ENCODE measurements at regions of chr2 and their contacts with region 1.

Region 1: DNA sequence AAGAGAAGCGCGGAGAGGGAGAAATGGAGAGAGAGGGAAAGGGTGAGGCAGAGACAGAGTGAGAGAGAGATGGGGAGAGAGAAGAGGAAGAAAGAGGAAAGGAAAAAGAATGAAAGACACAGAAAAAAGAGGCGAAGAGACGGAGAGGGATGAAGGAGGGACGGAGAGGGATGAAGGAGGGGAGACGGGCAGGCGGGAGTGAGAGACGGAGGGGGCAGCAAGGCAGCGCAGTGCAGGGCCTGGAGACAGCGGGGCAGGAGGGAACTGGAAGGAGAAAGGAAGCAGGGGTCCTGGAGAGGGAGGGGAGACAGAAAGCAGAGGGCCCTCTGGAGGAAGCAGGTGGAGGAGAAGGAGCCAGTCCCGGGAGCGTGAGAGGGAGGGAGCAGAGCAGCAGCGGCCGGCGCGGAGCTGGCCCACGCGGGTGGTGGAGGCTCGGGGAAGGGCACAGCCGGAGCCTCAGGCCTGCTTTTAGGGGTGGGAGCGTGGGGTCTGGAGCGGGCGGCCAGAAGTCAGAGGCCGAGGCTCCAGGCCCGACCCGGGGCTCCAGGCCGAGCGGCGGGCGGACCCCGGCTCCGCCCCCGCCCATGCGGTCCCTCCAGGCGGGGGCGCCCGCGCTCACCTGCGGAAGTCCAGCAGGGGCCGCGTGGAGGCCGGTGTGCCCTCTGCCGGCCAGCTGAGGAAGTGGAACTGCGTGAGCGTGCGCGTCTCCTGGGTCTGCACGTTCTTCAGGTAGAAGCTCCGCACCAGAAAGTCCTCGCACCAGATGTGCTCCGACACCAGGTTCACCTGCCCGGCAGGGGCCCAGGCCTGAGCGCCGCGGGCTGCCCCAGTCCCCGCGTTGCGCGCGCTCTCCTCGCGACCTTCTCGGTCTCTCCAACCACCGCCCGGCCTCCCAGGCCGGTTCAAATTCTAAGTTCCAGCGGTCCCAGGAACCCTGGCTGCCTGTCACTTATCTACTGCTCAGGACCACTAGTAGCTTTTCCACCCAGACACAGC is 14.5 kb downstream of the PTPRN start:
- DNase-seq: peak; percentile 90
- H3K4me3 Mint-ChIP-seq: peak overlapping the region; percentile 66
- H3K27ac Mint-ChIP-seq: no peak overlapping the region
- H3K4me1 Mint-ChIP-seq: peaks cover 22% of the 10 kb centered on the region
- H3K27me3 Mint-ChIP-seq: peaks cover 14% of the 10 kb centered on the region

Region 2: DNA sequence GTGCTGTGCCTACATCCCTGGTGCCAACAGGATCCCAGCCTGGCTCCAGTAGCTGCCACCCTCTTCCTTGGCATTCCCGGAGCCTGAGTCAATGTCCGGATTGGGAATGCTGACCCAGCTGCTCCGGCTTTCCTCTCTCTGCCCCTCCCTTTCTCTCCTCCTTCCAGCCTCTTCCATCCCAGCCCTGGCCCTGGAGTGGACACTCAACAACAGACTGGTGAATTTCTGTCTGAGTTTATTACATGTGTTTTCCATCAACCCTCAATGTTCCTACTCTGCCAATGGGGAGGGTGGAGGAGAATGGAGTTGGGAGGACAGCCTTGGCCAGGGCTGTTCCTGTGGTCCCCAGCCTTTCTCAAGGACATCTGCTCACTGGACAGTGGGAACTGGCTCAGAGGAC is 462.1 kb before region 1 on chr2:
- CTCF ChIA-PET with region 1: no interaction called
- POLR2A ChIA-PET with region 1: no interaction called
- DNase-seq: no peak
- H3K4me3 Mint-ChIP-seq: no peak overlapping the region
- H3K27ac Mint-ChIP-seq: no peak overlapping the region
- H3K4me1 Mint-ChIP-seq: no peaks in the 10 kb centered on the region
- H3K27me3 Mint-ChIP-seq: peaks cover 28% of the 10 kb centered on the region

Region 3: DNA sequence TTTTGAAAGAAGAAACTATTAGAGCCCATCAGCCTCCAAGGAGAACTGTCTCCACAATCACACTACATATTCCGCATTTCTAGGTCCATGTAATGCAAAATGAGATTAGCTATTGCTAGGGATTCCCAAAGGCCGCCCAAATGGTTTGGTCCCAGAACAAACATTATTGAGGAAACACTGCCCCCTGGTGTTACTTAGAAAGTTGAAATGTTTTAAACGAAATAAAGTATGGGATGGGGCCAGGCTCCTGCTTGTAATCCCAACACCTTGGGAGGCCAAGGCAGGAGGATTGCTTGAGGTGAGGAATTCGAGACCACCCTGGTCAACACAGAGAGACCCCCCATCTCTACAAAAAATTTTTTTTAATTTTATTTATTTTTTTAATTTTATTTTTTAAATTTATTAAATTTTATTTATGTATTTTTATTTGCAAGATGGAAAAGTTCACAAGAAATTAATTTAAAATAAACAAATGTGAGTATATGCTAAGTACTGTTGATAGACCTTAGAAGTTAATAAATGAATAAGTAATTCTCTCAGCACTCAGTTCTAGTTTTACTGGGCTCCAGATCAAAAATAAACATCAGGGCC is 139.5 kb before region 1 on chr2:
- CTCF ChIA-PET with region 1: interaction called, 122 read pairs
- POLR2A ChIA-PET with region 1: interaction called, 5 read pairs
- DNase-seq: peak; percentile 27
- H3K4me3 Mint-ChIP-seq: no peak overlapping the region
- H3K27ac Mint-ChIP-seq: no peak overlapping the region
- H3K4me1 Mint-ChIP-seq: peaks cover 9% of the 10 kb centered on the region
- H3K27me3 Mint-ChIP-seq: no peaks in the 10 kb centered on the region

Region 4: DNA sequence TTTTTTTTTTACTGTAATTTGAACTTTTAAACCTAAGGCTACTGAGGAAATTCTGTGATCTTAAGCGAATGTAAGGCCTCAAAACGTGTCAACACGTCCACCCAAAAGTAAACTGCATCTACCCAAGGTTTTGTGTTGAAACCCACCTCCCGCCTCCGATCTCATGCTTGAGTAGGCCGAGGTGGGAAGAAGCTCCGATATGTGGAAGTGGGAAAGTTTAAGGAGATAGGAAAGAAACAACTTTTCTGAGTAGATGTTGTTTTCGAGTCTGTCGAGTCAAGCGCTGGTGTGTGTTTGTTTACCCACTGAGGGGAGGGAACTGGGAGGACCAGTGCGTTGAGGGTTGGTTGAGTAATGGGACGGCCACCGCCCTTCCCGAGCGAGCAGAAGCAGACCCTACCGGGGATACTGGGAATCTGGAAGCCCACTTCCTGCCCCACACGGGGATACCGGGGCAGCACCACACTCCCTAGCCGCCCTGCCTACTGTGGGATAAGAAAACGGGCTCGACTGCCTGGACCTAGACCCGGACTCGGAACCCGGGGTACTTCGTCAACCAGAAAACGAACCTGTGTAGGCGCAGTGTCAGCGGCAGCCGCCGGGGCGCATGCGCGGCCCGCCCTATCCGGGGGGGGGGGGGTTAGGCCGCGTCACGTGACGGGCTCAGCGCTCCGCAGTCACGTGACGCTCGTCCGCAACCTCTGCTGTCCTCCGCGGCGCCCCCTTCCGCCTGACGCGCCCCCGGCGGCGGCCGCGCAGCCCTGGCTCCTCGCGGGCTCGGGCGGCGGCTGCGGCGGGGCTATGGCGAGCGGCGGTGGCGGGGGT is 116.9 kb before region 1 on chr2 and contains the start of gene RETREG2:
- CTCF ChIA-PET with region 1: interaction called, 26 read pairs
- POLR2A ChIA-PET with region 1: interaction called, 14 read pairs
- DNase-seq: peak; percentile 84
- H3K4me3 Mint-ChIP-seq: peak within 1 kb of the TSS; percentile 85
- H3K27ac Mint-ChIP-seq: peak within 1 kb of the TSS; percentile 99
- H3K4me1 Mint-ChIP-seq: peaks cover 72% of the 10 kb centered on the region
- H3K27me3 Mint-ChIP-seq: no peaks in the 10 kb centered on the region
- total RNA-seq, gene RETREG2: 107 to 113 TPM

Region 5: DNA sequence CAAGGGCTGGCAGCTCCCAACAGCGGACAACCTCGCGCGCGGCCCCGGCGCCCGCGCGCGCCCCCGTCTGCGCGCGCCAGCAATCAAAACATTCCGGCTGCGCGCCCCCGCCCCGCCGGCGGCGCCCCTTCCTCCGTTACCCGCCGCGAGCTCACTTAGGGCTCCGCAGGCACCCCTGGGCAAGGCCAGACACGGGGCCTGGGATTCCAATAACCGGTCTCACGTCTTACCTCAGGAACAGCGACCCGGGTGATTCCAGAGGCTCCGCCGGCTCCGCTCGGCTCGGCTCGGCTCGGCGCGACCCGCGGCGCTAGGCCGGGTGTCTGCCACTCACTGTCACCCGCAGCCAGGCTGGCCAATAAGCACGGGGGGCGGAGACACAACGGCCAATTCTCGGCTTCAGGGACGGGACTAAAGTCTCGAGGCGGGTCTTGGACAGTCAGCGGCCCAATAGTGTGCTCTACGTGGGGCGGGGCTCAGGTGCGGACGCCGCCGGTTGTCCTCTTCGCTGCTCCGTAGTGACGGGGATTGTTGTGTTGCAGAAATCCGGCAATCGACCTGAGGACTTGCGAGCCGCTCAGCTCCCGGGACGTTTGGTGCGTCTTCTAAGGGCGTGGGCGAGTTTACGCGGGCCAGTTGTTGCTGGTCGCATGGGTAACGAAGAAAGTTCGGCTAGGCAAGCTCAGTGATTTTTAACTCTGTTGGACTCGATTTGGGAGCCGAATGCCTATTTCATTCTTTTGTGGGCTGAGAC is 65.2 kb before region 1 on chr2 and contains the starts of genes ANKZF1 and ATG9A:
- CTCF ChIA-PET with region 1: interaction called, 19 read pairs
- POLR2A ChIA-PET with region 1: interaction called, 17 read pairs
- DNase-seq: peak; percentile 99
- H3K4me3 Mint-ChIP-seq: peak within 1 kb of the TSS; percentile 99
- H3K27ac Mint-ChIP-seq: peak within 1 kb of the TSS; percentile 100
- H3K4me1 Mint-ChIP-seq: peaks cover 56% of the 10 kb centered on the region
- H3K27me3 Mint-ChIP-seq: no peaks in the 10 kb centered on the region
- total RNA-seq, gene ANKZF1: 121 to 122 TPM
- total RNA-seq, gene ATG9A: 58.9 to 60.7 TPM

Region 6: GRCh38 chr2:219261024-219261855 is 33.4 kb before region 1 on chr2:
- CTCF ChIA-PET with region 1: interaction called, 120 read pairs
- POLR2A ChIA-PET with region 1: no interaction called
- DNase-seq: no peak
- H3K4me3 Mint-ChIP-seq: no peak overlapping the region
- H3K27ac Mint-ChIP-seq: no peak overlapping the region
- H3K4me1 Mint-ChIP-seq: no peaks in the 10 kb centered on the region
- H3K27me3 Mint-ChIP-seq: peaks cover 23% of the 10 kb centered on the region

Region 7: DNA sequence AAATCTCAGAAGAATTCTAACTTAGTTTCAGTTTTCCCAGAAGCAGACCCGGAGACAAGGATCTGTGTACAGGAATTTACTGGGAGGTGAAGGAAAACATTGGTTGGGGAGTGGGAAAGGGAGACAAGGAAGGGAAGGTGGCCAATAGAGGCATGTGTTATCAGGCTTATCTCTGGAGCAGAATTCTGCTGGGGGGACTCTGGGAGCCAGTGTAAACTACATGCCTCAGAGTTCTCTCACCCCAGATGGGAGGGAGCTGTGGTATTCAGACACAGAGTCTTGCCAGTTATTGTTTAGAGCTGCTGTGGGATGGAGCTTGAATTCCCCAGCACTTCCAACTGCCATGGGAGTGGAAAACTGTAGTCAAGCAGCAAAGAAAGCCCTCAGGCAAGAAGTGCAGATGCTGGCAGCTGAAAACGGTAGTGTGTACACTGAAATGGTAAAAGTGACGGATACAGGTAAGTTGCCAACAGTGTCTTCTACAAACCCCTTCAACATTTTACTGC is 74.1 kb after region 1 on chr2:
- CTCF ChIA-PET with region 1: no interaction called
- POLR2A ChIA-PET with region 1: no interaction called
- DNase-seq: no peak
- H3K4me3 Mint-ChIP-seq: no peak overlapping the region
- H3K27ac Mint-ChIP-seq: no peak overlapping the region
- H3K4me1 Mint-ChIP-seq: no peaks in the 10 kb centered on the region
- H3K27me3 Mint-ChIP-seq: no peaks in the 10 kb centered on the region

Region 8: DNA sequence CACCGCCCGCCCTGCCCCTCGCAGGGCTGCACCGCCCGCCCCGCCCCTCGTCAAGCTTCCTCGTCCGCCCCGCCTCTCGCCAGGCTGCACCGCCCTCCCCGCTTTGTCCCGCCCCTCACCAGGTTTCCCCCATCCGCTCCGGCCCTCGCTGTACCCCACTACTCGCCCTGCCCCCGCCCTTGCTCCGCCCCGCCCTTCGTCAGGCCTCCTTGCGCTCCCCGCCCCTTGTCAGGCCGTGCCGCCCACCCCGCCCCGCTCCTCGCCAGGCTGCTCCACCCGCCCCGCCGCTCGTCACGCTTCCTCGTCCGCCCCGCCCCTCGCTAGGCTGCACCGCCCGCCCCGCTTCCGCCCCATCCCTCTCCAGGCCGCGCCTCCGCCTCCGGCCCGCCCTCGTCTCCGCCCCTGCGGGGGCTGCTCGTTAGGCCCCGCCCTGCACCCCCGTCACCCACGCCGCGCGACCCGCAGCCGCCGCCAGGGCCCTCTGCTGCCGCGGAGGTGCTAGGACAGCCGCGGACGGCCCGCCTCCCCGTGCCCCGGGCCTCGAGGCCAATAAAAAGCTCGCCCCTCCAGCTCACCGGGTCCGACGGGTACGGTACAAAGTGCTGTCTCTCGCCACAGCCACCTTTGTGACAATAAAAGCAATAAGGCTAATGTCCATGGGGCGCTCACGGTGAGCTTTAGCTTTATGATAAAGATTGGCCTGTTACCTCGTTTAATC is 93.6 kb after region 1 on chr2:
- CTCF ChIA-PET with region 1: interaction called, 11 read pairs
- POLR2A ChIA-PET with region 1: interaction called, 4 read pairs
- DNase-seq: peak; percentile 98
- H3K4me3 Mint-ChIP-seq: peak overlapping the region; percentile 70
- H3K27ac Mint-ChIP-seq: peak overlapping the region; percentile 67
- H3K4me1 Mint-ChIP-seq: peaks cover 16% of the 10 kb centered on the region
- H3K27me3 Mint-ChIP-seq: peaks cover 9% of the 10 kb centered on the region